Mammary epithelial cell (primary cell): ENCODE measurements at regions of chr11 and their contacts with region 1.

Region 1: GRCh38 chr11:96794152-96794551 is 404.3 kb downstream of the JRKL start:
- DNase-seq: peak; percentile 3
- H3K4me3 ChIP-seq: no peak overlapping the region
- H3K27ac ChIP-seq: no peak overlapping the region
- H3K4me1 ChIP-seq: no peaks in the 10 kb centered on the region
- H3K27me3 ChIP-seq: peaks cover 2% of the 10 kb centered on the region
- CTCF ChIP-seq: peak; percentile 10 to 42

Region 2: DNA sequence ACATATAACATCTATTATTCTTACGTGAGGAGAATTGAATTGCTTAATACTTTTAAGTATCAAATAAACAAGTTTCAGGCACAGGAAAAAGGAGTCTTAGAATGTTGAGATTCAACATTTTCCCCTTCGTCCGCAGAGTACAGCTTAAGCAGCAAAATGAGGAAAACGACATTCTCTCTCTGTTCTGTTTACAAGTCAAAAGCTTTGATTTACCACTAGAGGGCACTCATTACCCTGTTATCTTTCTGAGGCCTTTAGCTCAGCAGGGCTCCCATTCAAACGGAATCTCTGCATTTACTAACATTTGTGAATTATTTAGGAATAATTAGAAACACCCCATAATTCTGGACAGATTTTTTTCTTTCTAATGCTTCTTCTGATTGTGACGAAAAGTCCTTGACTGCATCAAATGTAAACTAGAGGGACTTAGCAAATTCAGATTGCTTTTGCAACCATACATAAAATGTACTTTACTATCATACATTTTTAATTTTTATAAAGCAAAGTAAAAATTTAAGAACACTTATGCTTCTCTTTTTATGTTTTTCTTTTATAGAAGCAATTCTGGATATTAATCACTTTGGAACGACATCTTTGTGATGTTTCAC is 329.3 kb before region 1 on chr11:
- CTCF ChIA-PET with region 1: interaction called, 3 read pairs
- dilution Hi-C with region 1: no loop called
- in situ Hi-C with region 1: loop called (anchors 10 to 25 kb)
- intact Hi-C with region 1: loop called (anchors 1 kb)
- DNase-seq: peak; percentile 54
- H3K4me3 ChIP-seq: no peak overlapping the region
- H3K27ac ChIP-seq: no peak overlapping the region
- H3K4me1 ChIP-seq: peaks cover 4% of the 10 kb centered on the region
- H3K27me3 ChIP-seq: peaks cover 3% of the 10 kb centered on the region
- CTCF ChIP-seq: peak; percentile 68 to 70

Region 3: GRCh38 chr11:96524475-96524874 is 269.7 kb before region 1 on chr11:
- CTCF ChIA-PET with region 1: no interaction called
- dilution Hi-C with region 1: no loop called
- in situ Hi-C with region 1: no loop called
- intact Hi-C with region 1: loop called (anchors 2 kb)
- DNase-seq: no peak
- H3K4me3 ChIP-seq: no peak overlapping the region
- H3K27ac ChIP-seq: no peak overlapping the region
- H3K4me1 ChIP-seq: no peaks in the 10 kb centered on the region
- H3K27me3 ChIP-seq: no peaks in the 10 kb centered on the region
- CTCF ChIP-seq: peak in 1 of 2 donors; percentile 30

Region 4: GRCh38 chr11:97454988-97455387 is 660.8 kb after region 1 on chr11:
- CTCF ChIA-PET with region 1: no interaction called
- dilution Hi-C with region 1: no loop called
- in situ Hi-C with region 1: no loop called
- intact Hi-C with region 1: no loop called
- DNase-seq: no peak
- H3K4me3 ChIP-seq: no peak overlapping the region
- H3K27ac ChIP-seq: no peak overlapping the region
- H3K4me1 ChIP-seq: no peaks in the 10 kb centered on the region
- H3K27me3 ChIP-seq: no peaks in the 10 kb centered on the region
- CTCF ChIP-seq: peak; percentile 24 to 44